ENCODE measurements at regions of chr7 and their contacts with region 1.

Region 1: DNA sequence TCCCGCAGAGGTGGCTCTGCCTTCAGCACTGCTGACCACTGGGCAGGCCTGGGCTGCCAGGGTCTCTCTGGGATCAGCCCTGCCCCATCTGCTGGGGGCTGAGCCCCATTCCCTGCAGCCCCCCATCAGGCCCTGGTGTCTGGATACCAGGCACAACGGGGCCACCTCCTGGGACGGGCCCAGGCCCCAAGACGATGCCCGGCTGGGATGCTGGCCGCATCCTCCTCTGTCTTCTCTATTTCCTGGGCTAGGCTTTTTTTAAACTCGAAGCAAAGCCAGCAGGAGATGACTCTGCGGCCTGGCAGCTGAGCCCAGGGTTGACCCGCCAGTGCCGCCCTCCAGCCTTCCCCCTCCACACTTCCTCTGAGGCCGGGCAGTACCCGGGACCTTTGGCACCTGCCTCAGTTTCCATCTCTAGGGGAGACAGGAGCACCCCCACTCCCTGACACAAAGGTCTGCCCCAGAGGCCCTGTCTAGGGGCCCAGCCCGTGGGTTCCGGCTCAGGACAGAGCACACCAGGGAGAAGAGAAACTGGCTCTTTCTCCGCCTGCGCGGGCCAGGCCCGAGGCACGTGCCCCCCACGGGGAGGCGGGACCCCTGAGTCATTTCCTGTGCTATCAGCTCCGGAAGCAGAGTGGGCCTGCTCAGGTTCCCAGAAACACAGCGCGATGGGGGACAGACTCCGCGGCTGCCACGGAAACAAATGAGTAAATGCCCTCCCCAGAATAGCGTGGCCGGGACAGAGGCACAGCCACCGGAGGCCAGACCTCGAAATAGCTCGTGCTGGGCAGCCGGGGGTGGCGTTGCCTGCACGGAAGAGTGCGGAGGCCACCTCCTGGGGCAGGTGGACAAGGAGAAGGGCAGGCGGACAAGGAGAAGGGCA is 84.6 kb upstream of the PDGFA start:
- DNase-seq: peak in 1 of 2 experiments; percentile 8
- H3K4me3 ChIP-seq: no peak overlapping the region
- H3K27ac ChIP-seq: no peak overlapping the region
- H3K4me1 ChIP-seq: no peaks in the 10 kb centered on the region
- H3K27me3 ChIP-seq: no peaks in the 10 kb centered on the region
- CTCF ChIP-seq: no peak

Region 2: DNA sequence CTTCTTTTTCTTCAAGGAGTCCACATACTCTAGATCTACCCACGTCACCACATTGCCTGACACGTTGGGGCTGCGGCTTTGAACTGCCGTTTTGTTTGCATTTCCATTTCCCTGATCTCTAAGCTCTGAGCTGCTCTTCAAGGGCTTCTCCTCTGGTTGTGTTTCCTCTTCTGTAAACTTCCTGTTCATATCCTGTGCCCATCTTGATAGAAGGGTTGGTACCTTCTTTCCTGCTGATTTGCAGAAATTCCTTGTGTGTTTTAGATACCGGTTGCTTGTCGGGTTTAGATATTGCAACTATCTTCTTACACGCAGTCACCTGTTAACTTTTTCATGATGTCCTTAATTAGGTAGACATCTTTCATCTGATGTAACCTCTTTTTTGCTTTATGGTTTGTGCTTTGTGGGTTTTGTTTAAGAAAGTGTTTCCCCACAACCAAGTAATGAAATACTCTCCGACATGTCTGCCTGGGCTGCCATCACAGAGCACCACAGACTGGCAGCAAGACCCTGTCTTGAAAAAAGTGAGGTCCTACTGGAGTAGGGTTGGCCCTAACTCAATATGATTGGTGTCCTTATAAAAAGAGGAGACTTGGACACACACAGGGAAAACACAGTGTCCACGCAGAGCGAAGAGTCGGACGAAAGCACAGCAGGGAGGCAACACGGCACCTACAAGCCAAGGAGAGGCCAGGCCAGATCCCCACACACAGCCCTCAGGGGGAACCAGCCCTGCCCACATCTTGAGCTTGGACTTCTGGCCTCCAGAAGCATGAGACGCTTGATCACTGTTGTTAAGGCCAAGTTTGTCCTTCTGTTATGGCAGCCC is 14.5 kb after region 1 on chr7:
- CTCF ChIA-PET with region 1: no interaction called
- POLR2A ChIA-PET with region 1: interaction called, 12 read pairs
- intact Hi-C with region 1: no loop called
- DNase-seq: no peak
- H3K4me3 ChIP-seq: no peak overlapping the region
- H3K27ac ChIP-seq: no peak overlapping the region
- H3K4me1 ChIP-seq: peaks cover 31% of the 10 kb centered on the region
- H3K27me3 ChIP-seq: no peaks in the 10 kb centered on the region
- CTCF ChIP-seq: no peak

Measured in PC-9 (cell line).